Panc1 (cell line): ENCODE measurements at regions of chr7 and their contacts with region 1.

Region 1: DNA sequence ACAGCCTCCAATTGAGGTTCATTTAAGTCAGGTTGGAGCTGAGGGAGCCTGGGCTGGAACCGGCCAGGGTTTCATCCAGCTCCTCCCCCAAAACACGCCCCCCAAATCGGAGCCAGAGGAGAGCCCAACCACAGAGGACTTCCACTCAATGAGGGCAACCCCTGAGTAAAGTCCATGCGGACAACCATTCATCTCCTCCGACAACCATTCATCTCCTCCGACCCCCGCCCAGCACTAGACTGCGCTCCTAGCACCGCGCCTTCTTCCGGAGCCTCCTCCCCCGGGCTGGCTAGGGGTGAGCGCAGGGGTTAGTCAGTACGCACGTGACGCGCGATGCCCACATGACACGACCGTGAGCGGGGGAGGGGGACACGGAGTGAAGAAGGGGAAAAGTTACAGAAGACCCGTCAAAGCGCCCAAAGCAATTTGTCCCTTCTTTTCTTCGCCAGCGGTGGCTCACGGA is 1.4 kb downstream of the MAGI2 start:
- DNase-seq: peak; percentile 83
- ATAC-seq: peak; percentile 88
- H3K4me3 ChIP-seq: peak overlapping the region; percentile 79 to 94
- H3K27ac ChIP-seq: peak overlapping the region; percentile 83
- H3K4me1 ChIP-seq: peaks cover 39% of the 10 kb centered on the region
- H3K27me3 ChIP-seq: no peaks in the 10 kb centered on the region
- CTCF ChIP-seq: no peak

Region 2: DNA sequence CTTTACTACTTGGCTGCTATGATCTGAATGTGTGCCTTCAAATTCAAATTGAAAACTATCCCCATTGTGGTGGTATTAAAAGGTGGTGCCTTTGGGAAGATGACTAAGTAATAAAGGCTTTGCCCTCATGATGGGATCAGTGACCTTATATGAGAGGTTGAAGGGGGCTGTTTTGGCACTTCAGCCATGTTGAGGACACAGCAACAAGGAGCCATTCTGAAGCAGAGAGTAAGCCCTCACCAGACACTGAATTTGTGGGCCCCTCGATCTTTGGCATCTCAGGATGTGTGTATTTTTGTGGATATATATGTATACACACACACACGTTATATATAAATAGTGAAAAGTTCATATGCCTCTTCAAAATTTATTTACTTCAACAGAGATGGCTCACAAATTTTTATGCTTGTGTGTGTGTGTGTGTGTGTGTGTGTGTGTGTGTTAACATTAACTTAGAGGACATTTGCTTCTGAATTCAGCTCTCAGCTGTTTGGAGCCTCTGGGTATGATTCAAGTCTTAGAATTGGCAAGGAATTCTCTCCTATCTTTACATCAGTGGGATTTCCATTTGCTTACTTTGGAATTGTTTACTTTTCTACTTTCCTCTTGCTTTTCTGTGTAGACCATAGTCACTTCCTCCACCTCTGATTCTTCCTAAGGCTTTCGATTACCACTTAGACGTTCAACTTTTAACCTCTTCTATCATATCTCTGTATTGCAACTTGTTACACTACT is 65.2 kb before region 1 on chr7:
- CTCF ChIA-PET with region 1: no interaction called
- POLR2A ChIA-PET with region 1: interaction called, 10 read pairs
- in situ Hi-C with region 1: no loop called
- intact Hi-C with region 1: no loop called
- DNase-seq: peak; percentile 70
- ATAC-seq: peak; percentile 98
- H3K4me3 ChIP-seq: peak overlapping the region in 1 of 2 experiments; percentile 1; a peak in 1 of 4 replicates
- H3K27ac ChIP-seq: peak overlapping the region; percentile 94
- H3K4me1 ChIP-seq: peaks cover 19% of the 10 kb centered on the region
- H3K27me3 ChIP-seq: no peaks in the 10 kb centered on the region
- CTCF ChIP-seq: no peak